Stomach (tissue), 19 donors: ENCODE measurements at regions of chr17 and their contacts with region 1.

Region 1: GRCh38 chr17:82029990-82030469 is 1.4 kb upstream of the RAC3 start:
- DNase-seq: no peak
- H3K4me3 ChIP-seq: peak overlapping the region in 3 of 4 donors; percentile 51 to 71 (median 68)
- H3K27ac ChIP-seq: peak overlapping the region in 2 of 5 donors; percentile 11 to 73
- H3K4me1 ChIP-seq: peaks cover 16 to 36% (median 31%) of the 10 kb centered on the region in 4 donors
- H3K27me3 ChIP-seq: peaks cover 0 to 14% (median 8%) of the 10 kb centered on the region in 3 donors
- CTCF ChIP-seq: no peak
- EP300 ChIP-seq: no peak
- POLR2A ChIP-seq: no peak

Region 2: GRCh38 chr17:82153745-82154375 is 123.8 kb after region 1 on chr17:
- intact Hi-C with region 1: loop called (anchors 2 kb)
- DNase-seq: peak; percentile 88 to 89
- H3K4me3 ChIP-seq: no peak overlapping the region
- H3K27ac ChIP-seq: peak overlapping the region; percentile 22 to 93 (median 84)
- H3K4me1 ChIP-seq: peaks cover 0 to 29% (median 17%) of the 10 kb centered on the region in 4 donors
- H3K27me3 ChIP-seq: no peaks in the 10 kb centered on the region
- CTCF ChIP-seq: peak in 5 of 7 experiments; percentile 83 to 97 (median 92)
- EP300 ChIP-seq: no peak
- POLR2A ChIP-seq: no peak